ENCODE measurements at regions of chr9 and their contacts with region 1.

Region 1: GRCh38 chr9:112074250-112075008 is 100.7 kb downstream of the SUSD1 start:
- DNase-seq: peak in 1 of 2 donors; percentile 87
- ATAC-seq: peak; percentile 55 to 73 (median 62)
- H3K4me3 ChIP-seq: no peak overlapping the region
- H3K4me3 Mint-ChIP-seq: peak overlapping the region; percentile 14
- H3K27ac ChIP-seq: no peak overlapping the region
- H3K27ac Mint-ChIP-seq: peak overlapping the region; percentile 19 to 47
- H3K4me1 ChIP-seq: peaks cover 15% of the 10 kb centered on the region
- H3K4me1 Mint-ChIP-seq: peaks cover 28 to 36% of the 10 kb centered on the region in 2 donors
- H3K27me3 ChIP-seq: no peaks in the 10 kb centered on the region
- H3K27me3 Mint-ChIP-seq: no peaks in the 10 kb centered on the region
- CTCF ChIP-seq: peak; percentile 80

Region 2: GRCh38 chr9:111759762-111760639 is 314.4 kb before region 1 on chr9:
- intact Hi-C with region 1: loop called (anchors 1 kb)
- DNase-seq: peak in 1 of 2 donors; percentile 83
- ATAC-seq: peak; percentile 72 to 82 (median 73)
- H3K4me3 ChIP-seq: no peak overlapping the region
- H3K4me3 Mint-ChIP-seq: no peak overlapping the region
- H3K27ac ChIP-seq: no peak overlapping the region
- H3K27ac Mint-ChIP-seq: no peak overlapping the region
- H3K4me1 ChIP-seq: no peaks in the 10 kb centered on the region
- H3K4me1 Mint-ChIP-seq: peaks cover 0 to 4% of the 10 kb centered on the region in 2 donors
- H3K27me3 ChIP-seq: no peaks in the 10 kb centered on the region
- H3K27me3 Mint-ChIP-seq: no peaks in the 10 kb centered on the region
- CTCF ChIP-seq: peak; percentile 75

Region 3: GRCh38 chr9:111828193-111828592 is 246.2 kb before region 1 on chr9:
- intact Hi-C with region 1: loop called (anchors 1 kb)
- DNase-seq: peak in 1 of 2 donors; percentile 44
- ATAC-seq: no peak
- H3K4me3 ChIP-seq: no peak overlapping the region
- H3K4me3 Mint-ChIP-seq: no peak overlapping the region
- H3K27ac ChIP-seq: no peak overlapping the region
- H3K27ac Mint-ChIP-seq: no peak overlapping the region
- H3K4me1 ChIP-seq: no peaks in the 10 kb centered on the region
- H3K4me1 Mint-ChIP-seq: no peaks in the 10 kb centered on the region
- H3K27me3 ChIP-seq: no peaks in the 10 kb centered on the region
- H3K27me3 Mint-ChIP-seq: peaks cover 8 to 10% of the 10 kb centered on the region in 2 donors
- CTCF ChIP-seq: no peak

Region 4: GRCh38 chr9:112174218-112174964 is 100.0 kb after region 1 on chr9:
- intact Hi-C with region 1: no loop called
- DNase-seq: peak; percentile 84 to 85
- ATAC-seq: peak; percentile 76 to 91 (median 82)
- H3K4me3 ChIP-seq: peak overlapping the region; percentile 33
- H3K4me3 Mint-ChIP-seq: peak overlapping the region; percentile 92
- H3K27ac ChIP-seq: peak overlapping the region; percentile 50
- H3K27ac Mint-ChIP-seq: peak overlapping the region; percentile 94 to 96
- H3K4me1 ChIP-seq: peaks cover 69% of the 10 kb centered on the region
- H3K4me1 Mint-ChIP-seq: peaks cover 78 to 89% of the 10 kb centered on the region in 2 donors
- H3K27me3 ChIP-seq: no peaks in the 10 kb centered on the region
- H3K27me3 Mint-ChIP-seq: no peaks in the 10 kb centered on the region
- CTCF ChIP-seq: no peak